Left lung (tissue), 14 donors: ENCODE measurements at regions of chr1 and their contacts with region 1.

Region 1: DNA sequence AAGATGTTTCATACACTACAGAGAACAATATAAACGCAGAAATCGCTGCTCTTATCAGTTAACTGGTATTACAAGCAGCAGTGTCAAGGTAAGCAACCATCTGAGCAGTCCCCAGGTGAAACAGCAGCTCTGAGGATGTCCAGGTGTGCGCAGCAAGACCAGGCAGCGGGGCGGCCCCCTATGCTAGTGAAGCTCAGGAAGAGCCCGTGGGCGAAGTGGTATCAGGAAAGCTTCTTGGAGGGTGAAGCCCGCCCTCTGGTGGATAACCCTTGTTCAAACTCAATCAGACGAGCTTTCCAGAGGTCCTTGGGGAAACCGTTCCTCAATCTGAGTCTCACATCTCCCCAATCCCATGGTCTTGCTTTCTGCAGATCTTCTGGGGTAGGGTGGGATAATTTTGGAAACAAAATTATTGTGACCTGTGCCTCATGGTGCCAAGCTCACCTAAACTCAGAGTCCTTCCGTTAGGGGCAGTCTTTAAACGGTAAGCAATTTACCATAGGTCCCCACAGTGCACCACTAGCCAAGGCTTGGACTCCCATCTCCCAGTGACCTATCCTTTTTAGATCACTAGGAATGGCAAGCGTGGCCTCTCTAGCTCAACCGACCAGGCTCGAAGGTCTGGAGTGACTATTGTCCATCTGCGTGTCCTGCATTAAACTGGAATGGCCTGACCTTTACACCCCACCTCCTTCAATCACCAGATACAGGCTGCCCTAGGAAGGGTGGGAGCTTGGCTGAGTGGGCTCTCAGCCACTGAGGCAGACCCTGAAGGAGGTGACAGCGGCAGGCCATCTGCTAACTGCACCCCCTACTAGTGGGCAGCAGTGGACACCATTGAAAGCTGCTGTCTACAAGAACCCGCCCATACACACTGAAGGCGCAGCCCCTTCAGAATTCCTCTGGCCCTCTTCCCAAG is 13.6 kb upstream of the FAM110D start:
- DNase-seq: peak in 3 of 4 donors; percentile 76 to 85 (median 81)
- ATAC-seq: peak; percentile 97
- H3K4me3 ChIP-seq: no peak overlapping the region
- H3K27ac ChIP-seq: no peak overlapping the region
- H3K4me1 ChIP-seq: peaks cover 0 to 10% of the 10 kb centered on the region in 2 donors
- H3K27me3 ChIP-seq: no peaks in the 10 kb centered on the region
- CTCF ChIP-seq: peak; percentile 81 to 86

Region 2: GRCh38 chr1:25858906-25859789 is 286.2 kb before region 1 on chr1 and contains the start of gene AUNIP:
- intact Hi-C with region 1: no loop called
- DNase-seq: peak; percentile 84 to 98 (median 91)
- ATAC-seq: peak; percentile 99
- H3K4me3 ChIP-seq: peak within 1 kb of the TSS; percentile 42 to 58
- H3K27ac ChIP-seq: peak within 1 kb of the TSS; percentile 89 to 92
- H3K4me1 ChIP-seq: peaks cover 6 to 32% of the 10 kb centered on the region in 2 donors
- H3K27me3 ChIP-seq: no peaks in the 10 kb centered on the region
- CTCF ChIP-seq: no peak
- polyA plus RNA-seq, gene AUNIP: 1.8 to 3.1 (median 2.7) TPM

Region 3: DNA sequence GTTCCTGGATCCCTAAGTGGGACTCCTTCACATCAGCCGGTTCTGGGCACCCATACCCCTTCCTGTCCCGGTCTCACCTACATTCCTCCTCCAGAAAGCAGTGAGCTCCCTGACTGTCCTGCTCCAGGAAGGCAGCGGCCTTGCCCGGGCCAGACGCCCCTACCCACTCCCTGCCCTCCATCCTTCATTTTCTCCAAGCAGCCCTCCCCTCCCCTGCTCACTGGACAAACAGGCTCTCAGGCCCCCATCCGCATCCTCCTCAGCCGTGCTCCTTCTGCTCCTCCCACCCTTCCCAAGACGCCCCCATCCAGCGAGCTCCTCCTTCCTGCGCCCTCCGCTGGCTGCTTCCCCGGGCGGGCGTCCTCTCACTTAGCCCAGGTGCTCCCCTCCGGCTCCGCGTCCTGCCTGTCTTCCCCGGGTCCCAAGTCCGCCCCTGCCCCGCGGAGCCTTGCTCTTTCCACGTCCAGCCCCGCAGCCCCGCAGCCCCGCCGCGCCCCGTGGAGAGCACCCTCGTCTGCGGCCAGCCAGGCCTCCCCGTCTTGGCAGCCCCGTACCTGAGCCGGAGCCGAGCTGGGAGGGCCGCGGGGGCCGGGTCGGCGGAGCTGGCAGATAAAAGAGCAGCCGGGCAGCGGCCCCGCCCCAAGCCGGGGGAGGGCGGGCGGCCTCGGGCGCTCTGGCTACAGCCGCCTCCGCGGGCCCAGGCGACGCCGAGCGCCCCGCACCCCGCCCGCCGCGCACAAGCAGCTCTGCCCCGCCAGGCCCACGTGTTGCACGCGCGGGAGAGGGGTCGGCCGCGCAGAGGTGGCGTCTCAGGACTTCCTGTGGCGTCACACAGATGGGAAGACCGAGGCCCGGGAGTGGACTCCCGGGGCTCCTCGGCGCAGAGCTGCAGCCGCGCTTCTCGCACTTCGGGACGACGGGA is 270.1 kb before region 1 on chr1 and contains the start of gene PAQR7:
- intact Hi-C with region 1: no loop called
- DNase-seq: peak; percentile 70 to 94 (median 86)
- ATAC-seq: peak; percentile 87
- H3K4me3 ChIP-seq: peak within 1 kb of the TSS; percentile 45 to 61
- H3K27ac ChIP-seq: peak within 1 kb of the TSS; percentile 79 to 83
- H3K4me1 ChIP-seq: peaks cover 21 to 59% of the 10 kb centered on the region in 2 donors
- H3K27me3 ChIP-seq: no peaks in the 10 kb centered on the region
- CTCF ChIP-seq: no peak
- polyA plus RNA-seq, gene PAQR7: 16.3 to 20.2 (median 18.8) TPM

Region 4: GRCh38 chr1:26083246-26083645 is 62.1 kb before region 1 on chr1:
- intact Hi-C with region 1: no loop called
- DNase-seq: no peak
- ATAC-seq: no peak
- H3K4me3 ChIP-seq: no peak overlapping the region
- H3K27ac ChIP-seq: no peak overlapping the region
- H3K4me1 ChIP-seq: no peaks in the 10 kb centered on the region
- H3K27me3 ChIP-seq: peaks cover 0 to 9% of the 10 kb centered on the region in 2 donors
- CTCF ChIP-seq: no peak

Region 5: GRCh38 chr1:26102526-26102925 is 42.8 kb before region 1 on chr1:
- intact Hi-C with region 1: loop called in 1 of 2 experiments (anchors 5 kb)
- DNase-seq: no peak
- ATAC-seq: no peak
- H3K4me3 ChIP-seq: no peak overlapping the region
- H3K27ac ChIP-seq: no peak overlapping the region
- H3K4me1 ChIP-seq: peaks cover 0 to 7% of the 10 kb centered on the region in 2 donors
- H3K27me3 ChIP-seq: no peaks in the 10 kb centered on the region
- CTCF ChIP-seq: no peak

Region 6: GRCh38 chr1:26429721-26430120 is 284.4 kb after region 1 on chr1:
- intact Hi-C with region 1: no loop called
- DNase-seq: peak in 2 of 4 donors; percentile 39 to 46
- ATAC-seq: no peak
- H3K4me3 ChIP-seq: no peak overlapping the region
- H3K27ac ChIP-seq: no peak overlapping the region
- H3K4me1 ChIP-seq: peaks cover 16 to 31% of the 10 kb centered on the region in 2 donors
- H3K27me3 ChIP-seq: peaks cover 0 to 15% of the 10 kb centered on the region in 2 donors
- CTCF ChIP-seq: no peak